ENCODE measurements at regions of chr2 and their contacts with region 1.

Region 1: DNA sequence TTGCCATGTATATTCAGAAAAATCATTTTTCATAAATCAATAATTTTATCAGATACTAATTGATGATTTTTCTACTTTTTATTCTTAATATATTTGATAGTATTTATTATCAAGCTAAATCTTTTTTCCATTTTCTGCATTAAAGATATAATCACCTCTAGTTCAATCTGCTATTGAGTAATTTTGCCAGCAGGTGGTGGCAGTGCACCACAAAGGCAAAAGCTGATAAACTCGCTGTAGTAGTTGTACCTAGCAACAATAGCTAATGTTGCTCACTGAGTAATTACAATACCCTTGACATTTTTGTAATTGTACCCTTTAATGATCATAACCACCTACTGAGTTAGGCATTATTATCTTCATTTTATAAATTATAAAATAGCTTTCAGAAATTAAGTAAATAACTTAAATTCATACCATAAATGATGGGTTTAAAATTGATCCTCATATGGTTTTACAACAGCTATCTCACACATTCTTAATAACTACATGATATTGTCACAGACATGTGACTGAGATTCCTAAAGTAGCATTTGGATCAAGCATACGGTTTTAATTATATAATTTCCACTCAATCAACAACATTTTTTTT is 52.0 kb upstream of the CALCRL start:
- DNase-seq: peak; percentile 75
- H3K4me3 Mint-ChIP-seq: no peak overlapping the region
- H3K27ac Mint-ChIP-seq: no peak overlapping the region
- H3K4me1 Mint-ChIP-seq: peaks cover 4% of the 10 kb centered on the region
- H3K27me3 Mint-ChIP-seq: peaks cover 4% of the 10 kb centered on the region

Region 2: DNA sequence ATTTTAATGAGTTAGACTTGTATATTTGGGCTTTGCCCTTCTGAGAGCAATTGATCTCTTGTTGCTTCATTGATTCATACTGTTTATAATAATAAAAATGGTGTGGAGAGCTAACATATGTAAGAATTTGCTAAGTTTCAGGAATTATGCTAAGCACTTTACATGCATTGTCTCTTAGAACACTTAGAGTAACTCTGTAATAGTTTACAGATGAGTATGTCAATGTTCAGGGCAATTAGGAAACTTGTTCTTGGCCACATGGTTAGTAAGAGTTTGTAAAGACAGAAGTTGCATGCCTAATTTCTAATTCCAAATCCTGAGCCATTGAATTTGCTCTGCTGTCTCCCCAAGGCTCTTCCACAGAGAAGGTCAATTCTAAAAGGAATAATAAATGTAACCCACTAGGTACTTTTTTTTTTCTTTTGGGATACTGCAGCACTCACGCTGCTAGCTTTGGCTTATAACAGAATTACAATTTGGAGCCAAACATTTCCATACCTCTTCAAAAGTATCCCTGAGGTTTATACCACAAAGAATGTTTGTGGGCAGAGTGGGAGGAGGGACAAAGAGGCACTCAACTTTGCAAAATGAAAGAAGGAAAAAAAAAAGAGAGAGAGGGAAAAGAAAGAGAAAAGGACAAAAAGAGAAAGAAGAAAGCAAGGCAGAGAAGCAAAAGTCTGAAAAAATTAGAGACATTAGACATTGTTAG is 284.4 kb before region 1 on chr2:
- CTCF ChIA-PET with region 1: no interaction called
- intact Hi-C with region 1: no loop called
- DNase-seq: no peak
- H3K4me3 Mint-ChIP-seq: no peak overlapping the region
- H3K27ac Mint-ChIP-seq: no peak overlapping the region
- H3K4me1 Mint-ChIP-seq: no peaks in the 10 kb centered on the region
- H3K27me3 Mint-ChIP-seq: no peaks in the 10 kb centered on the region

Region 3: DNA sequence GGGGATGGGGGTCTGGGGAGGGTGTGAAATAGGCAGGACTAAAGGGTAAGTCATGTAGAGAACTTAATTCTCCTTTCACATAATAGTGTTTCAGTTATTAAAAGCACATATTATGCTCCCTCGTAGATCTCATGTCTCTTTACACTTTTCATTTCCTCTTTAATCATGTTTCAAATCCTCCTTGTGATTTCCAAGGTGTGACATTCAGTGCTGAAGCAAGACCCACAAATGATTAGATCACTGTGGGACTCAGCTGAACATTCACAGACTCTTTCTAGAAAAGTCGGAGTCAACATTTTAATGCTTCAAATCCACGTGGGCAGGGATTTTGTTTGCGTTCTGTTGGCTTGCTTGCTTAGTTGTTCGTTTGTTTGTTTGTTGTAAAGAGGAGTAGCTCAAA is 17.2 kb before region 1 on chr2:
- CTCF ChIA-PET with region 1: no interaction called
- intact Hi-C with region 1: no loop called
- DNase-seq: no peak
- H3K4me3 Mint-ChIP-seq: no peak overlapping the region
- H3K27ac Mint-ChIP-seq: no peak overlapping the region
- H3K4me1 Mint-ChIP-seq: no peaks in the 10 kb centered on the region
- H3K27me3 Mint-ChIP-seq: peaks cover 2% of the 10 kb centered on the region

Region 4: DNA sequence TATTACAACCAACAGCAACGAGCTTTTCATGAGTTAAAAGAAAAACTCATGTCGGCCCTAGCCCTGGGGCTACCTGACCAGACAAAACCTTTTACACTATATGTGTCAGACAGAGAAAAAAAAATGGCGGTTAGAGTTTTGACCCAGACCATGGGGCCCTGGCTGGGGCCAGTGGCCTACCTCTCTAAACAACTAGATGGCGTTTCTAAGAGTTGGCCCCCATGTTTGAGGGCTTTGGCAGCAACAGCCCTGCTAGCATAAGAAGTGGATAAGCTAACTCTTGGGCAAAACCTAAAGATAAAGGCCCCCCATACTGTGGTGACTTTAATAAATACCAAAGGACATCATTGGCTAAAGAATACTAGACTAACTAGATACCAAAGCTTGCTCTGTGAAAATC is 14.9 kb after region 1 on chr2:
- CTCF ChIA-PET with region 1: interaction called, 10 read pairs
- intact Hi-C with region 1: no loop called
- DNase-seq: no peak
- H3K4me3 Mint-ChIP-seq: no peak overlapping the region
- H3K27ac Mint-ChIP-seq: no peak overlapping the region
- H3K4me1 Mint-ChIP-seq: peaks cover 2% of the 10 kb centered on the region
- H3K27me3 Mint-ChIP-seq: peaks cover 5% of the 10 kb centered on the region

Region 5: GRCh38 chr2:187574969-187575750 is 75.1 kb after region 1 on chr2:
- CTCF ChIA-PET with region 1: interaction called, 89 read pairs
- intact Hi-C with region 1: loop called (anchors 1 kb)
- DNase-seq: no peak
- H3K4me3 Mint-ChIP-seq: no peak overlapping the region
- H3K27ac Mint-ChIP-seq: no peak overlapping the region
- H3K4me1 Mint-ChIP-seq: no peaks in the 10 kb centered on the region
- H3K27me3 Mint-ChIP-seq: no peaks in the 10 kb centered on the region

Region 6: DNA sequence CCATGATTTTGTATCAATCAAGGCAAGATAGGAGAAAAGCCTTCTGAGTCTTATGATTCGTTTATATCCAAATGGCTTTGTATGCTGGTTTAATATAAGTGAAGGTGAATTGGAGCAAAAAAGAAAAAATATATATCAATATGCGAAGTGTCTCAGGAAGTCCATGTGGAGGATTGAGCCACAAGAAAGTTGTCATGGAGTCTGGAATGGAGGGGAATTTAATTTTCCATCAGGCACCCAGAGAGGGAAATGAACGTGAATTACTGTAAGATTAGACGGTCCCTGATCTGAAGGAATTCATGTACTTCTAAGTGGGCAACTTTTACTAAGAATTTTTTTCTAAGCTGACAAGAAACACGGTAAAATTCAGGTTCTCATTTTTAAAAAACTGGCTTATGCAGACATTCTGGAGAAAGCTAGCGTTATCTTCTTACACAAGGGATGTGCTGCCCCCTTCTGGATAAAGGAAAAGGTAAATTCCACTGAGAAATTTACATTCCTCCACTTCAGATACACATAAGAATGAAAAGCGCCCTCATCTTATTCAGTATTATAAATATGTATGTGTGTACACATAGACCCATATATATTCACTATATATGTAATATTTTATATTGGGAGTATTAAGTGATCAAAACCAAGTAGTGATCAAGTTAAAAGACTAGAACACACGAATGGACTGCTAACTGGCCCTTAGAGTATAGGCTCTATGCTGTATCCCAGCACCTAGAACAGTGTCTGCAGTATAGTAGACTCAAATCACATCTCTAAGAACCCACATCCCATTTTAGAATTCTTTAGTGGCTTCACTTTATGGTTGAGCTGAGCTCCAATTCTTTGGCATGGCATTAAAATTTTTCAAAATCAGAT is 343.2 kb after region 1 on chr2:
- CTCF ChIA-PET with region 1: interaction called, 11 read pairs
- intact Hi-C with region 1: loop called (anchors 1 kb)
- DNase-seq: no peak
- H3K4me3 Mint-ChIP-seq: no peak overlapping the region
- H3K27ac Mint-ChIP-seq: no peak overlapping the region
- H3K4me1 Mint-ChIP-seq: no peaks in the 10 kb centered on the region
- H3K27me3 Mint-ChIP-seq: no peaks in the 10 kb centered on the region

Region 7: GRCh38 chr2:188369365-188369764 is 869.3 kb after region 1 on chr2:
- CTCF ChIA-PET with region 1: no interaction called
- intact Hi-C with region 1: loop called (anchors 1 kb)
- DNase-seq: peak; percentile 18
- H3K4me3 Mint-ChIP-seq: no peak overlapping the region
- H3K27ac Mint-ChIP-seq: no peak overlapping the region
- H3K4me1 Mint-ChIP-seq: no peaks in the 10 kb centered on the region
- H3K27me3 Mint-ChIP-seq: no peaks in the 10 kb centered on the region

Region 8: DNA sequence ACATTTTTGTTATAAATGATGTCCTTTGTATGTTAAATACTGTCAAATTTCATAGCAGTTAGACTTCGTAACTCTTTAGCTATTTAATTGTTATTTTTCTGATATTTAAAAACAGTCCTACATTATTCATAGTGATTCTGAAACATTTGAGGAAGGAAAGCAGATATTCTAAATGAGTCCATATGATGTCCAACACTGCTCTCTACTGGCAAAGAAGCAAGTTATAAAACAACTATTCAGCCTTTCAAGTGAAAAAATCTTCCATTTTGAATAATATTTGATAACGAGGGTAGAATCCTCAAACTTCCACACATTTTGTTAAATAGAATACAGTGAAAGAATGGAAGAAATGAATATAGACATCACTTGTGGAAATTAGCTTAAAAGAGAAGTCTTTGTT is 1012.4 kb after region 1 on chr2:
- CTCF ChIA-PET with region 1: interaction called, 5 read pairs
- intact Hi-C with region 1: loop called (anchors 1 kb)
- DNase-seq: no peak
- H3K4me3 Mint-ChIP-seq: no peak overlapping the region
- H3K27ac Mint-ChIP-seq: no peak overlapping the region
- H3K4me1 Mint-ChIP-seq: no peaks in the 10 kb centered on the region
- H3K27me3 Mint-ChIP-seq: no peaks in the 10 kb centered on the region

Measured in activated naive CD4-positive, alpha-beta T cell treated with anti-CD3 and anti-CD28 coated beads for 36 hours (primary cell).